PC-3 (cell line): ENCODE measurements at regions of chr16 and their contacts with region 1.

Region 1: GRCh38 chr16:85746008-85746781 is 4.7 kb downstream of the C16orf74 start:
- DNase-seq: peak; percentile 96
- ATAC-seq: peak; percentile 71
- H3K4me3 ChIP-seq: peak overlapping the region; percentile 54
- H3K27ac ChIP-seq: peak overlapping the region; percentile 99
- H3K4me1 ChIP-seq: peaks cover 36% of the 10 kb centered on the region
- H3K27me3 ChIP-seq: no peaks in the 10 kb centered on the region
- CTCF ChIP-seq: no peak

Region 2: GRCh38 chr16:85659805-85660495 is 86.2 kb before region 1 on chr16:
- CTCF ChIA-PET with region 1: interaction called, 11 read pairs
- POLR2A ChIA-PET with region 1: no interaction called
- intact Hi-C with region 1: no loop called
- DNase-seq: peak; percentile 58
- ATAC-seq: peak; percentile 84
- H3K4me3 ChIP-seq: no peak overlapping the region
- H3K27ac ChIP-seq: no peak overlapping the region
- H3K4me1 ChIP-seq: no peaks in the 10 kb centered on the region
- H3K27me3 ChIP-seq: no peaks in the 10 kb centered on the region
- CTCF ChIP-seq: peak; percentile 88

Region 3: DNA sequence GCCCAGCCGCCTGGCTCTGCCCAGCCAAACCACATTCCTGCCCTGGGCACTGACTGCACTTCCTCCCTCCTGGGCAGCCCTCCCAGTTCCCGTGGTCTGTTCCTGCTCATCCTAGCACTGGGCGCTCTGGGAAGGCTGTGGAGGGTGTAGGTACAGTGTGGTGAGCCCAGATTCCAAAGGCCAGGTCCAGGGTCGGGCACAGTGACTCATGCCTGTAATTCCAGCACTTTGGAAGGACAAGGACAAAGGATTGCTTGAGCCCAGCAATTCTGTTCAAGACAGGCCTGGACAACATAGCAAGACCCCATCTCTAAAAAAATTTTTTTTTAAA is 25.9 kb before region 1 on chr16:
- CTCF ChIA-PET with region 1: no interaction called
- POLR2A ChIA-PET with region 1: no interaction called
- intact Hi-C with region 1: loop called (anchors 1 kb)
- DNase-seq: peak; percentile 90
- ATAC-seq: peak; percentile 97
- H3K4me3 ChIP-seq: no peak overlapping the region
- H3K27ac ChIP-seq: peak overlapping the region; percentile 28; the same call in 1 of the 2 replicates
- H3K4me1 ChIP-seq: peaks cover 10% of the 10 kb centered on the region
- H3K27me3 ChIP-seq: no peaks in the 10 kb centered on the region
- CTCF ChIP-seq: no peak